ENCODE measurements at regions of chr2 and their contacts with region 1.

Region 1: DNA sequence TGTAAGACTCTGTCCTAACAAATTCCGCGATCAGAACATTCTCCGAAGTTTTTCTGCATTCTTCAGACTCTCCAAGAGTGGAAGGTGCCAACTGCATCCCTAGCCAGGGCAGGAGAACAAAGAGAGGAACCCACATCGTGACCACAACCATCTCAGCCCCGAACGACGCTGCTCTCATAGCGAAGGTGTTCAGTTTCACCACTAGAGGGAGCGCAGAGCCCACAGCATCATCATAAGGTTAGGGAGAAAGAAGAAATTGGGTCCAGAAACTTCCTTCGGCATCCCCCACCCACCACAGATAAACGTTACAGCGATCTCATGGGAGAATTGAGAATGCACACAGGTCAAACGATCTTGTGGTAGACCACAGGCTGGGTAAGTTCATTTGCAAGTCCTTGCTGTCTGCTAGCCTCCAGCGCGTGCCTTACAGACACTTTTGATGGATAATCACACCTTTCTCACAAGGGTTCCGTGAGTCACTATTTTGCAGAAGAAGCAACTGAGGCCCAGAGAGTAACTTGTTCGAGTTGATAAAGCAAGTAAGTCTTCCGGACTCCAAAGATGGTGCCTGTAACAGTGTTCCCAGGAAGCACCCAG is 53.7 kb upstream of the ARL4C start:
- DNase-seq: peak; percentile 18 to 78 (median 53)
- ATAC-seq: peak; percentile 64
- H3K4me3 ChIP-seq: no peak overlapping the region
- H3K4me3 Mint-ChIP-seq: no peak overlapping the region
- H3K27ac ChIP-seq: no peak overlapping the region
- H3K27ac Mint-ChIP-seq: no peak overlapping the region
- H3K4me1 ChIP-seq: no peaks in the 10 kb centered on the region
- H3K4me1 Mint-ChIP-seq: peaks cover 1% of the 10 kb centered on the region
- H3K27me3 ChIP-seq: no peaks in the 10 kb centered on the region
- H3K27me3 Mint-ChIP-seq: peaks cover 22% of the 10 kb centered on the region
- CTCF ChIP-seq: peak; percentile 97

Region 2: DNA sequence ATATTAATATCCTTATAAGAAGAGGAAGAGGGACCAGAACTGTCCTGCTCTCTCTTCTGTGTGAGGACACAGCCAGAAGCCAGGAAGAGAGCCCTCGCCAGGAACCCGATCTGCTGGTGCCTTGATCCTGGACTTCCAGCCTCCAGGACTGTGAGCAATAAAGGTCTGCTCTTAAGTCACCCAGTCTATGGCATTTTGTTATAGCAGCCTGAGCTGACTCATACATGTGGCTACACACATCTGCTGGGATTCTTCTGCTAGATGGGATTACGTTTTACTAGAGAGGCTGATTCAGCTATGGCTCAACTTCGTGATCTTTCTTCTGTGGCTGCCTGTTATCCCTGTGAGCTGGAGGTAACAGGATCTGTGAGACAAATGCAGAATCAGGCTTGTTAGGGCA is 83.3 kb before region 1 on chr2:
- CTCF ChIA-PET with region 1: no interaction called
- POLR2A ChIA-PET with region 1: no interaction called
- intact Hi-C with region 1: no loop called
- DNase-seq: no peak
- ATAC-seq: no peak
- H3K4me3 ChIP-seq: no peak overlapping the region
- H3K4me3 Mint-ChIP-seq: no peak overlapping the region
- H3K27ac ChIP-seq: no peak overlapping the region
- H3K27ac Mint-ChIP-seq: no peak overlapping the region
- H3K4me1 ChIP-seq: peaks cover 35% of the 10 kb centered on the region
- H3K4me1 Mint-ChIP-seq: peaks cover 50% of the 10 kb centered on the region
- H3K27me3 ChIP-seq: no peaks in the 10 kb centered on the region
- H3K27me3 Mint-ChIP-seq: no peaks in the 10 kb centered on the region
- CTCF ChIP-seq: no peak

Region 3: DNA sequence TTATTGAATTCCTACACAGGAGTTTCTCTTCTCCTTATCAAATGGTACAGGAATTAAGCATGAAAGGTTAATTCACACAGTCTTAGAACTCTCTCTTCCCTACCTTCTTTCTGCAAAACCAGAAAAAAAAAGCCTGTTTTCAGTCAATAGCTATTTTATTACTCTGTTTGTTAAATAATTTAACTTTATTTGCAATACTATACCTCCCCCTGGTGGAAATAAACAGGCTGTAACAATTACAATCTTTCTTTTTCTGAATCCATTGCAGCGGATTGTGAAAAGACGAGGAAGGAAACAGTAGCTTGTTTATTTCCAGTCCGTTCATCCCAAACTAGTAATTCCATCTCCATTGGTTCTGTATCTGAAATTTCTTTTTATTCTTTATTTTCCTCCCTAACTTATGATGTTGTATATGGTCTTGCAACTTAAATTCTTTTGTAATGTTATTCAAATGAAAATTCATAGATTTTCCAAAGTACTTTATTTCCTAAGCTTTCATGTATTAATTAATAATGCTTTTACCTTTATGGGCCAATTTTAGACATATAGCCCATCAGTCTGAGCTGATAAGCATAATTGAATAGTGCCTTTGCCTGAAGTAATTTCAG is 566.4 kb after region 1 on chr2:
- CTCF ChIA-PET with region 1: interaction called, 9 read pairs
- POLR2A ChIA-PET with region 1: no interaction called
- intact Hi-C with region 1: loop called in 1 of 2 experiments (anchors 1 kb)
- DNase-seq: peak in 2 of 9 experiments; percentile 31 to 41
- ATAC-seq: no peak
- H3K4me3 ChIP-seq: no peak overlapping the region
- H3K4me3 Mint-ChIP-seq: no peak overlapping the region
- H3K27ac ChIP-seq: no peak overlapping the region
- H3K27ac Mint-ChIP-seq: no peak overlapping the region
- H3K4me1 ChIP-seq: no peaks in the 10 kb centered on the region
- H3K4me1 Mint-ChIP-seq: no peaks in the 10 kb centered on the region
- H3K27me3 ChIP-seq: peaks cover 0 to 2% of the 10 kb centered on the region in 2 experiments
- H3K27me3 Mint-ChIP-seq: peaks cover 14% of the 10 kb centered on the region
- CTCF ChIP-seq: peak; percentile 65

Region 4: GRCh38 chr2:235746257-235747084 is 1195.9 kb after region 1 on chr2:
- CTCF ChIA-PET with region 1: interaction called, 5 read pairs
- POLR2A ChIA-PET with region 1: no interaction called
- intact Hi-C with region 1: loop called in 1 of 2 experiments (anchors 1 kb)
- DNase-seq: peak in 6 of 9 experiments; percentile 13 to 76 (median 34)
- ATAC-seq: no peak
- H3K4me3 ChIP-seq: no peak overlapping the region
- H3K4me3 Mint-ChIP-seq: no peak overlapping the region
- H3K27ac ChIP-seq: no peak overlapping the region
- H3K27ac Mint-ChIP-seq: no peak overlapping the region
- H3K4me1 ChIP-seq: no peaks in the 10 kb centered on the region
- H3K4me1 Mint-ChIP-seq: no peaks in the 10 kb centered on the region
- H3K27me3 ChIP-seq: no peaks in the 10 kb centered on the region
- H3K27me3 Mint-ChIP-seq: peaks cover 16% of the 10 kb centered on the region
- CTCF ChIP-seq: peak; percentile 48

Measured in CD8-positive, alpha-beta T cell (primary cell).